ENCODE measurements at regions of chr1 and their contacts with region 1.

Region 1: DNA sequence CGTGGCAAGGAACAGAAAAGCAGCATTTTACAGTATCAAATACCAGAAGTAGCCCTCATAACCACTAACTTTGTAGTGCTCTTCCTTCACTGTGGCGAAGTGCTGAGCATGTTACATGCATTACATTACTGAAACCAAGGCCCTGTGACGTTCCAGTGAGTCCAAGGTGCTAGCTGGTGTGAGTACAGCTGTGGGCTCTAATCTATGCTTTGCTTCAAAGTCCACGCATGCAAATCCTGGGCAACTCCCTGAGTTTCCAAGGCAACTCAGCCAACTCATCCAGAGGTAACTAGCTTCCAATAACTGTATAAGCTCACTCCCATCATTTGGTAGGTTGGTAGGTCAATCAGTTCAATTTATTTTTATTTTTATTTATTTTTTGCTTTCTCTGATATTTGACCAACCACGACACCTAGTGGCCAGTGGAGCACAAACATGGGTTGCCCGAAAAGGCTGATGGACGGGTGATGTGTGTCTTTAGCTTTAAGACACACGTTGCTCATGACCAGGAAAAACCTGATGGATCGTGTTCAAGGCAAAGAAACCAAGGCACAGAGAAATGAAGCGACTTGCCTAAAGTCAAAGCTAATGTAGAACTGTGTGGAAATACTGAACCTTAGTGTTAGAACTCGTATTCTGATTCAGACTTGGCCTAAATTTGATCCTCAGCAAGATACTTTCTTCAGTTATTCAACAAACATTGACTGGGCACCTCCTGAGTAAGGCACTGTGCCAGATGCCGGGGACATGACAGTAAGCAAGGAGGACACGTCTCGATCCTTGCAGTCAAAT is 73.0 kb downstream of the GNG12 start:
- DNase-seq: peak; percentile 79
- H3K27ac ChIP-seq: peak overlapping the region; percentile 53; the same call in 1 of the 2 replicates
- CTCF ChIP-seq: peak; percentile 82

Region 2: GRCh38 chr1:67535474-67535873 is 224.8 kb before region 1 on chr1:
- CTCF ChIA-PET with region 1: interaction called, 24 read pairs
- POLR2A ChIA-PET with region 1: no interaction called
- DNase-seq: peak; percentile 84
- H3K27ac ChIP-seq: peak overlapping the region; percentile 58
- CTCF ChIP-seq: peak; percentile 99

Region 3: DNA sequence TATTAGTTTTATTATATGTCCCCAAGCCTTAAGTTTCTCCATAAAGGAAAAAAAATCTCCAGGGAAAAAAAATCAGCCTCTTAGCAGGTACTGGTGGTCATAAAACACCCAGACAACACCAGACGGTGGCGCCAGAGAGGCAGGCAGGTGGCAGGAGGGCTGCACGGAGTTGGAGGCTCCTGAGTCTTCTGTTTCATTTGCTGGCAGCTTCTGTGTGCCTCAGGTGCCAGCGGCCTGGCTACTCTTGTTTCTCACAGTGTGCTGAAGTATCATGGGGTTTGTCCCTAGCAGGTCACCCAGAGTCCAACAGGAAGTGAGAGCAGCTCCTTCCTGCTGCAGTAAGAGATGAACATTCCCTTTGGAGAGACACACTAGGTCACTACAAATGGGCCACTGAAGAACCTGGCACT is 198.5 kb before region 1 on chr1:
- CTCF ChIA-PET with region 1: interaction called, 20 read pairs
- POLR2A ChIA-PET with region 1: interaction called, 3 read pairs
- DNase-seq: peak; percentile 76
- H3K27ac ChIP-seq: peak overlapping the region; percentile 59
- CTCF ChIP-seq: peak; percentile 90

Measured in RWPE1 (cell line).